B cell (primary cell): ENCODE measurements at regions of chr13 and their contacts with region 1.

Region 1: DNA sequence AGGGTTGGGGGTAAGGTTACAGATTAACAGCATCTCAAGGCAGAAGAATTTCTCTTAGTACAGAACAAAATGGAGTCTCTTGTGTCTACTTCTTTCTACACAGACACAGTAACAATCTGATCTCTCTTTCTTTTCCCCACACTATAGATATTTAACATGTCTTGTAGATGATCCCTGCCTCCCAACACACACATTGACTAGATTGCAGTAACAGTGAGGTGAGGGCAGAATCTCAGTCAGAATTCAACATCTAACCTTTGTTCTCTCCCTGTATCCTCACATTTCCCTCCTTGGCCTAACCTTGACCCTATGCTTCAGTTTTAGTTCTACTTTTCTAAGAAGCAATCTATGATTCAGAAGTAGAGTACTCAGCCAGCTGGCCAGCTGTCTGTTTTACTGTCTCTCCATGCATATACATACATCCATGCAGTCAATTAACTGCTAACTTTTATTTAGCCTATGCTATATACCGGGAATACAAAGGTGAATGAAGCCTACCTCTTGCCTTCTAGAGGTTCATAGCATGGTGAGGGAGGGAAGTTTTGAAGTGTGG is 18.1 kb downstream of the DNAJC15 start:
- DNase-seq: no peak
- ATAC-seq: peak; percentile 24
- H3K4me3 ChIP-seq: no peak overlapping the region
- H3K4me3 Mint-ChIP-seq: peak overlapping the region; percentile 52
- H3K27ac ChIP-seq: peak overlapping the region in 1 of 2 donors; percentile 38
- H3K27ac Mint-ChIP-seq: peak overlapping the region; percentile 83
- H3K4me1 ChIP-seq: peaks cover 50 to 55% of the 10 kb centered on the region in 2 donors
- H3K4me1 Mint-ChIP-seq: peaks cover 71% of the 10 kb centered on the region
- H3K27me3 ChIP-seq: no peaks in the 10 kb centered on the region
- H3K27me3 Mint-ChIP-seq: no peaks in the 10 kb centered on the region
- CTCF ChIP-seq: no peak

Region 2: GRCh38 chr13:43023289-43023951 is 18.0 kb before region 1 on chr13 and contains the start of gene DNAJC15:
- CTCF ChIA-PET with region 1: interaction called, 4 read pairs
- POLR2A ChIA-PET with region 1: interaction called, 9 read pairs
- intact Hi-C with region 1: loop called (anchors 2 kb)
- DNase-seq: peak; percentile 92
- ATAC-seq: peak; percentile 90
- H3K4me3 ChIP-seq: peak within 1 kb of the TSS; percentile 67 to 89 (median 70)
- H3K4me3 Mint-ChIP-seq: peak within 1 kb of the TSS; percentile 96
- H3K27ac ChIP-seq: peak within 1 kb of the TSS; percentile 81 to 87
- H3K27ac Mint-ChIP-seq: peak within 1 kb of the TSS; percentile 97
- H3K4me1 ChIP-seq: peaks cover 25 to 26% of the 10 kb centered on the region in 2 donors
- H3K4me1 Mint-ChIP-seq: peaks cover 41% of the 10 kb centered on the region
- H3K27me3 ChIP-seq: no peaks in the 10 kb centered on the region
- H3K27me3 Mint-ChIP-seq: no peaks in the 10 kb centered on the region
- CTCF ChIP-seq: peak; percentile 25
- total RNA-seq, gene DNAJC15: 13.5 and 15.2 TPM in 2 replicates

Region 3: DNA sequence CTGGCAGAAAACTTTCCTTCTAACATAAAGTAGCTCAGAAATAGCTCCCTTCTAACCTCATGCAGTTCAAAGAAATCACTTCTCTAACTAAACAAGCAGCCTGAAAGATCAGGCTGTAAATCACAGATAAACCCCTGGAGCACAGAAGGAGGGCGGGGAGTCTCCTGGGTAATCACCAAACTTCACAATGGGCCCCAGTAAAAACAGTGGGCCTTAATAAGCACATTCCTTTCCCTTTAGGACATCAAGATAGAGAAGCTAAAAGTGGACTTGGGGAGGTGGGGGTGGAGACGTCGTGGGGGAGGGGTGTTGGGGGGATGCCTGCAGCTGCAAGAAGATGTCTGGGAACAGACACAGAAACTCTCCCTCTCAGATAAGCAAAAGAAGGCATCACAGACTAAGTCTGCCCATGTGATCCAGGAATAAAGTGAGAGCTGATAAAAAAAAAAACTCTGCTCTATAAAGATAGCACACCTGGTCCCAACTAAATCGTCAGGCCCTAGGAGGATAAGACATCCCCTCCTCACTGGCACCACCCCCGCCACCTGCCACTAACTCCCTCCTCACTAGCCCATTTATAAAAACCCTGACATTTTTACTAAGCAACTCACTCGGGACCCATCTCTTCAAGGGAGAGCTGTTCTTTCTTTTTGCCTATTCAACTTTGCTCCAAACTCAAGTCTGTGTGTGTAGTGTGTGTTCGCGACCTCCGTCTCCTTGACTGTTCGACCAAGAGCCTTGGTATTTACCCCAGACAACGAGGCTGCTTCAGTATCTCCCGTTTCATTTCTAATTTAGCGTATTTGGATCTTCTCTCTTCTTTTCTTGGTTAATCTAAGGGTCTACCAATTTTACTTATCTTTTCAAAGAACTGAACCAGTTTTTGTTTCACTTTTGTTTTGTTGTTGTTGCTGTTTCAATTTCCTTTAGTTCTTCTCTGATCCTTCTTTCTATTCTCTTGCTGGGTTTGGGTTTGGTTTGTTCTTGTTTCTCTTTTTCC is 13.7 kb after region 1 on chr13:
- CTCF ChIA-PET with region 1: interaction called, 6 read pairs
- POLR2A ChIA-PET with region 1: interaction called, 7 read pairs
- intact Hi-C with region 1: loop called (anchors 1 kb)
- DNase-seq: peak; percentile 68
- ATAC-seq: peak; percentile 56
- H3K4me3 ChIP-seq: peak overlapping the region; percentile 51 to 78 (median 69)
- H3K4me3 Mint-ChIP-seq: no peak overlapping the region
- H3K27ac ChIP-seq: peak overlapping the region; percentile 77 to 98
- H3K27ac Mint-ChIP-seq: no peak overlapping the region
- H3K4me1 ChIP-seq: peaks cover 42 to 50% of the 10 kb centered on the region in 2 donors
- H3K4me1 Mint-ChIP-seq: peaks cover 41% of the 10 kb centered on the region
- H3K27me3 ChIP-seq: no peaks in the 10 kb centered on the region
- H3K27me3 Mint-ChIP-seq: no peaks in the 10 kb centered on the region
- CTCF ChIP-seq: no peak

Region 4: DNA sequence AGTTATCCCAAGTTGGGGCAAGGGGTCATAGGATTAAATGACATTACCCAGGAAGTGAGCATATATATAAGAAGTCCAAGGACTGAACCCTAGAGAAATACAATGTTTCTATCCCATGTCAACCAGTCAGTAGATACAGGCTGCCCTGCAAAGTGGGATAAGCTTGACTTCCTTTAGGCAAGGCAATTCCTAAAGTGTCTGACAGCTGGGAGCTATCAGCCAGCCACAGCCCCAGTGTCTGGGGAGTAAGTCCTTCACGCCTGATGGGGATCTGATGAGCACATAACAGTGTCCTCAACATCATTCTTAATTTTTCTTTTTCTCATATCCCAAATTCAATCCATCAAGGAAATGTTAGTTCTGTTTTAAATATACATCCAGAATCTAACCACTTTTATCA is 36.0 kb after region 1 on chr13:
- CTCF ChIA-PET with region 1: no interaction called
- POLR2A ChIA-PET with region 1: no interaction called
- intact Hi-C with region 1: no loop called
- DNase-seq: no peak
- ATAC-seq: no peak
- H3K4me3 ChIP-seq: no peak overlapping the region
- H3K4me3 Mint-ChIP-seq: no peak overlapping the region
- H3K27ac ChIP-seq: peak overlapping the region in 1 of 2 donors; percentile 56
- H3K27ac Mint-ChIP-seq: no peak overlapping the region
- H3K4me1 ChIP-seq: peaks cover 15 to 31% of the 10 kb centered on the region in 2 donors
- H3K4me1 Mint-ChIP-seq: peaks cover 41% of the 10 kb centered on the region
- H3K27me3 ChIP-seq: no peaks in the 10 kb centered on the region
- H3K27me3 Mint-ChIP-seq: no peaks in the 10 kb centered on the region
- CTCF ChIP-seq: no peak